ENCODE measurements at regions of chr9 and their contacts with region 1.

Region 1: GRCh38 chr9:18824095-18824666 is 208.8 kb downstream of the SAXO1 start:
- H3K4me3 Mint-ChIP-seq: no peak overlapping the region
- H3K27ac Mint-ChIP-seq: no peak overlapping the region
- H3K4me1 Mint-ChIP-seq: no peaks in the 10 kb centered on the region
- H3K27me3 Mint-ChIP-seq: no peaks in the 10 kb centered on the region

Region 2: DNA sequence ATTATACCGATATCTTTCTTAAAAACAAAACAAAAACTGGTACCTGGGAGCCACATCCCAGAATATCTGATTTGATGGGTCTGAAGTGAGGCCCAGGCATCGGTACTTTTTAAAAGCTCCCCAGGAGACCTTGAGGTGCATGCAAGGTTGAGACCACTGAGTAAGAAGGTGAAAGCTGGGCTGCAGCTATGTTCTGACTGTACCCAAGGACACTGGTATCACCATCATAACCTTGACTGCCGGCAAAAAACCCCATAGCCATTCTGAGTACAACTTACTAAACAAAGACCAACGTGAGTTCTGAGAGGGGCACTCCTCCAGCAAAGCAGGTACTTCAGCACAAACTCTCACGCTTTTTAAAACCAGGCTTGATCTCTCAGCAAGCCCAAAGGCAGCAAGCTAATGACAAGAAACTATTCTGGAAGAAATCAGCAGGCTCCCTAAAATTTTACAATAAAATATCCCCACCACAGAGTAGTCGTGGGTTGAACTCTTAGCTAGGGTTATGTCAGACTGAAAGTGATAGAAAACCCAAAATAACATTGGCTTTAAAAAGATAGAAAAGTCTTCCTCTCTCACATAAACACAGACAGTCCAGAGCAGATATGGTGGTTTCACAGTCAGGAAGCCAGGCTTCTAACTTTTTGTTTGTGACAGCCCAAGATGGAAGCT is 55.1 kb before region 1 on chr9:
- intact Hi-C with region 1: loop called (anchors 10 kb)
- H3K4me3 Mint-ChIP-seq: no peak overlapping the region
- H3K27ac Mint-ChIP-seq: no peak overlapping the region
- H3K4me1 Mint-ChIP-seq: no peaks in the 10 kb centered on the region
- H3K27me3 Mint-ChIP-seq: no peaks in the 10 kb centered on the region

Measured in dendritic cell treated with granulocyte-macrophage colony-stimulating factor and Interleukin-4, amounts not matched to agents 40 ng/mL and 50 ng/mL, for 4 days (primary cell).